Panc1 (cell line): ENCODE measurements at regions of chr3 and their contacts with region 1.

Region 1: DNA sequence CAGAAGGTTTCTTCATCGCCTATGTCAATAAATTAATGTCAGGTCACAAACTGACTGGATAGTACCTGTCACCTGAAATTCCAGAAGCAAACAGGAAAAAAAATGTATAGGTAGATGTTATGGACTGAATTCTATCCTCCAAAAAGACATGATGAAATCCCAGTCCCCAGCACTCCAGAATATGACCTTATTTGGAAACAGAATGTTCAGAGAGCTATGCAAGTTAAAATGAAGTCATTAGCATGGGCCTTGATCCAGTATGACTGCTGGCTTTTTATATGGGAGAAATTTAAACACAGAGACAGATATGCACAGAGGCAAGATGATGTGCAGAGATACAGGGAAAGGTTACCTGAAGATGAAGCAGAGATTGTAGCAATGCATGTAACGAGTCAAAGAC is 953.4 kb downstream of the ZPLD1 start:
- DNase-seq: no peak
- ATAC-seq: no peak
- H3K4me3 ChIP-seq: no peak overlapping the region
- H3K27ac ChIP-seq: no peak overlapping the region
- H3K4me1 ChIP-seq: no peaks in the 10 kb centered on the region
- H3K27me3 ChIP-seq: no peaks in the 10 kb centered on the region
- CTCF ChIP-seq: no peak

Region 2: DNA sequence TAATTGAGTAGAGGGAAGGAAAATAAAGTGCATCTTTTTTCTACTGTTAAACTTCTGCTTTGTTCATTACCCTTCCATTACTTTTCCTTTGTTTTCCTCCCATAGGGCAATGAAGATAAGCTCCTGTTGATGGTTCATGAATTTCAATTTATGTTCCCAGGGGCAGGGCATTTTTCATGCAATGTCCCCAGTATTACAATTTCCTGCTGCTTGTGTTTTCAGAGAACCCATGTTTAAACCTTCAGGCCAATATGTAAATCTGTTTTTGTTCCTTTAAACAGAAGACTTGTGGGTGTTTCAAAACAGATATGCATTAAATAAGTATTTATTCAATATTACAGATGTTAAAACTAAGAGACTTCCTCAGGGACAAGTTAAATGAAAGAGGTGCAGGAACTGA is 118.9 kb before region 1 on chr3:
- CTCF ChIA-PET with region 1: no interaction called
- POLR2A ChIA-PET with region 1: no interaction called
- in situ Hi-C with region 1: no loop called
- intact Hi-C with region 1: no loop called
- DNase-seq: no peak
- ATAC-seq: no peak
- H3K4me3 ChIP-seq: no peak overlapping the region
- H3K27ac ChIP-seq: no peak overlapping the region
- H3K4me1 ChIP-seq: no peaks in the 10 kb centered on the region
- H3K27me3 ChIP-seq: no peaks in the 10 kb centered on the region
- CTCF ChIP-seq: no peak

Region 3: GRCh38 chr3:103372031-103372430 is 16.2 kb before region 1 on chr3:
- CTCF ChIA-PET with region 1: no interaction called
- POLR2A ChIA-PET with region 1: no interaction called
- in situ Hi-C with region 1: no loop called
- intact Hi-C with region 1: no loop called
- DNase-seq: no peak
- ATAC-seq: no peak
- H3K4me3 ChIP-seq: no peak overlapping the region
- H3K27ac ChIP-seq: no peak overlapping the region
- H3K4me1 ChIP-seq: no peaks in the 10 kb centered on the region
- H3K27me3 ChIP-seq: no peaks in the 10 kb centered on the region
- CTCF ChIP-seq: no peak

Region 4: GRCh38 chr3:103672346-103672745 is 284.1 kb after region 1 on chr3:
- CTCF ChIA-PET with region 1: no interaction called
- POLR2A ChIA-PET with region 1: no interaction called
- in situ Hi-C with region 1: no loop called
- intact Hi-C with region 1: no loop called
- DNase-seq: no peak
- ATAC-seq: no peak
- H3K4me3 ChIP-seq: no peak overlapping the region
- H3K27ac ChIP-seq: no peak overlapping the region
- H3K4me1 ChIP-seq: no peaks in the 10 kb centered on the region
- H3K27me3 ChIP-seq: no peaks in the 10 kb centered on the region
- CTCF ChIP-seq: no peak

Region 5: DNA sequence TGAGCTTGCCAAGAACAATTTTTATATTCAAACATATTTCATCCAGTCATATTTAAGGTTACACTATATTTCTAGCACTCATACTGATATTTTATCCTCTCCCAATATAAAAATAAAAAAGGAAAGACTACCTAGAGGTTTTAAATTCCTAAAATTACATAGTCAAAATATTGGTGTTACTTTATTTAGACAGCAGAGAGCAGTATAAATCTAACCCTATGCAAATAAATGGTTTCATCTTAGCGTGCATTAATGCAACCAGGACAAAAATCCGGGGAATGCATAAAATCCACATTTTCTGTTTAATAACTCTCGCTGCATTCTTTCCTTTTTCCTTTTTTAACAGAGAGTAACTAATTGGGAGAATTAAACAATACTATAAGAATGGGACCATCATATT is 531.1 kb after region 1 on chr3:
- CTCF ChIA-PET with region 1: no interaction called
- POLR2A ChIA-PET with region 1: no interaction called
- in situ Hi-C with region 1: no loop called
- intact Hi-C with region 1: loop called (anchors 10 kb)
- DNase-seq: no peak
- ATAC-seq: no peak
- H3K4me3 ChIP-seq: no peak overlapping the region
- H3K27ac ChIP-seq: no peak overlapping the region
- H3K4me1 ChIP-seq: no peaks in the 10 kb centered on the region
- H3K27me3 ChIP-seq: no peaks in the 10 kb centered on the region
- CTCF ChIP-seq: no peak